GM12878 (cell line): ENCODE measurements at regions of chr2 and their contacts with region 1.

Region 1: DNA sequence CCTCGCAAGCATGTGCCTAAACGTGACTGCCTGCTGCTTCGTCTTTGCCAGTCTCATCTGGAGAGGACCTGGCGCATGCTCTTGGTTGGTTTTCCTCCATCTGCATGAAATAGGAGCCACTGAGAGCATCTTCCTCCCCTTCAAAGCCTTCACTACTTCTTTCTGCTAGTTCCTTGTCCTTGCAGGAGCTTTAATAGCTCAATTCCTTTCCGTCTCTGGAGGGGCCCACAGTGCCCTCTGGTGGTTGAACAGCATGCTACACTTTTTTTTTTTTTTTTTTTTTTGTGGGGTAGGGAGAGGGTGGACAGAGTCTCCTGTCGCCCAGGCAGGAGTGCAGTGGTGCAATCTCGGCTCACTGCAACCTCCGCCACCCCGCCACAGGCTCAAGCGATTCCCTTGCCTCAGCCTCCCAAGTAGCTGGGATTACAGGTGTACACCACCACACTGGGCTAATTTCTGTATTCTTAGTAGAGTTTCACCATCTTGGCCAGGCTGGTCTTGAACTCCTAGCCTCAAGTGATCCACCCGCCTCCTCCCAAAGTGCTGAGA is 59.6 kb downstream of the SP110 start:
- DNase-seq: peak; percentile 9
- ATAC-seq: peak; percentile 81
- H3K4me3 ChIP-seq: no peak overlapping the region
- H3K27ac ChIP-seq: no peak overlapping the region
- H3K4me1 ChIP-seq: no peaks in the 10 kb centered on the region
- H3K27me3 ChIP-seq: no peaks in the 10 kb centered on the region
- CTCF ChIP-seq: peak; percentile 63 to 70 (median 65)
- EP300 ChIP-seq: no peak
- POLR2A ChIP-seq: no peak
- RAD21 ChIP-seq: peak; percentile 86

Region 2: GRCh38 chr2:229815858-229816257 is 344.3 kb before region 1 on chr2:
- CTCF ChIA-PET with region 1: no interaction called
- POLR2A ChIA-PET with region 1: no interaction called
- RAD21 ChIA-PET with region 1: no interaction called
- SMC1A ChIA-PET with region 1: no interaction called
- in situ Hi-C with region 1: no loop called
- intact Hi-C with region 1: no loop called
- DNase-seq: no peak
- ATAC-seq: no peak
- H3K4me3 ChIP-seq: no peak overlapping the region
- H3K27ac ChIP-seq: no peak overlapping the region
- H3K4me1 ChIP-seq: no peaks in the 10 kb centered on the region
- H3K27me3 ChIP-seq: no peaks in the 10 kb centered on the region
- CTCF ChIP-seq: no peak
- EP300 ChIP-seq: no peak
- POLR2A ChIP-seq: no peak
- RAD21 ChIP-seq: no peak

Region 3: DNA sequence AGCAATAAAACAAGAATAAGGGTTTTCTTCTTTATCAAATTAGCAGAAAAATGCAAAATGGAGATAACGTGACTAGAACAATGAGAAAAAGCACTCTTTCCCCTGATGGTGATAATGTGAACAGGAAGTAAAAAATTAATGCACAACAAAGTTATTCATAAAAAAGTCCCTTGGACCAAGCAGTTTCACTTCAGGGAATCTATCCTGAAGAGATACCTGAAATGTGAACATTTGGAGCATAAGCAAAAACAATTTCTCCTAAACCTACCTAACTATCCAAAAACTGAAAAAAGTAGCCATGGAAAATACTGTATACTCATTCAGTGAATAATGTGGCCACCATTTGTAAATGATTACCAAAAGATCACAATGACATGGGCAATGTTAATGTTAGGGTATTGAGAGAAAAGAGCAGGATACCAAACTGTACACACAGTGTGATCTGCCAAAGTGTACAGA is 287.0 kb before region 1 on chr2:
- CTCF ChIA-PET with region 1: no interaction called
- POLR2A ChIA-PET with region 1: no interaction called
- RAD21 ChIA-PET with region 1: no interaction called
- SMC1A ChIA-PET with region 1: no interaction called
- in situ Hi-C with region 1: no loop called
- intact Hi-C with region 1: no loop called
- DNase-seq: peak; percentile 37
- ATAC-seq: peak; percentile 87
- H3K4me3 ChIP-seq: 0 out of 2 replicates have a peak overlapping the region, but pooled peaks have one; percentile 0
- H3K27ac ChIP-seq: peak overlapping the region; percentile 27; the same call in 1 of the 2 replicates
- H3K4me1 ChIP-seq: peaks cover 11% of the 10 kb centered on the region; the same call in 1 of the 2 replicates
- H3K27me3 ChIP-seq: no peaks in the 10 kb centered on the region
- CTCF ChIP-seq: no peak
- EP300 ChIP-seq: no peak
- POLR2A ChIP-seq: no peak
- RAD21 ChIP-seq: no peak

Region 4: DNA sequence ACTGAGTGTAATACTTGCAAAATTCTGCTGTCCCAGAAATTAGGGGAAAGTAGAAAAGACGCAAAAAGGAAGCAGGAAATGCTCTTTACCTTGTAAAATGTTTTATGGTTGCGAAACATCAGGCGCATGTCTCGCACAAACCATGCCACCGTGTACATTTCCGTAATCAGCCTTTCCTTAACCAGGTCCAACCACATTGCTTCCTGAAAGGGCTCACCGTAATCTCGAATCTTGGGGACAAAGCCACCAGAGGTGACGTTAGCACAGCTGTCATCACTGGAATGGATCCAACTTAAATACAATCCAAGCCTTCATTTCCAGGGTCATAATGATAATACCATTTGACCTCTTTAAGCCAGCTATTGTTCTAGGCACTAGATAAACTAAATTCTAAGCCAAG is 10.3 kb after region 1 on chr2:
- CTCF ChIA-PET with region 1: interaction called, 15 read pairs
- POLR2A ChIA-PET with region 1: no interaction called
- RAD21 ChIA-PET with region 1: interaction called, 3 read pairs
- SMC1A ChIA-PET with region 1: interaction called, 5 read pairs
- in situ Hi-C with region 1: no loop called
- intact Hi-C with region 1: no loop called
- DNase-seq: no peak
- ATAC-seq: no peak
- H3K4me3 ChIP-seq: no peak overlapping the region
- H3K27ac ChIP-seq: no peak overlapping the region
- H3K4me1 ChIP-seq: no peaks in the 10 kb centered on the region
- H3K27me3 ChIP-seq: no peaks in the 10 kb centered on the region
- CTCF ChIP-seq: no peak
- EP300 ChIP-seq: no peak
- POLR2A ChIP-seq: no peak
- RAD21 ChIP-seq: no peak